AG04450 (cell line): ENCODE measurements at regions of chr18 and their contacts with region 1.

Region 1: DNA sequence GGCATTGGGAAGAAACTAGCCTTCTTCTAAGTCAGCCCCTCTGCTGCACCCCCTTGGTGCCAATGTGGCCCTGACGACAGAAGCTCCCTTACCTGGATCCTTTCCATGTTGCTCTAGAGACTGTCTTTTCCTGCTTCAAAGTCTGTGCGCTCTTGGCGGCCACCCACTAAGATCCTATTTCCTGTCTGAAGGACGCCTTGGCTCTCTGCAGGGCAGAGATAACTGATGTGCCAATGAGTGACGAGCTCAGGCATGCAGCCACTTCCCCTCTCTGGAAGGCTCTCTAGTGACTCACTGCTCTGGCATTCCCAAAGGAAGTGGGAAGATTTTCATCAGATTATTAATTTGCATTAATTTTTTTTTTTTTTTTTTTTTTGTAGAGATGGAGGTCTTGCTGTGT is 273.5 kb downstream of the CDH20 start:
- DNase-seq: peak; percentile 68
- H3K4me3 ChIP-seq: peak overlapping the region; percentile 63
- H3K27ac ChIP-seq: peak overlapping the region; percentile 78
- H3K27me3 ChIP-seq: no peaks in the 10 kb centered on the region
- CTCF ChIP-seq: no peak

Region 2: DNA sequence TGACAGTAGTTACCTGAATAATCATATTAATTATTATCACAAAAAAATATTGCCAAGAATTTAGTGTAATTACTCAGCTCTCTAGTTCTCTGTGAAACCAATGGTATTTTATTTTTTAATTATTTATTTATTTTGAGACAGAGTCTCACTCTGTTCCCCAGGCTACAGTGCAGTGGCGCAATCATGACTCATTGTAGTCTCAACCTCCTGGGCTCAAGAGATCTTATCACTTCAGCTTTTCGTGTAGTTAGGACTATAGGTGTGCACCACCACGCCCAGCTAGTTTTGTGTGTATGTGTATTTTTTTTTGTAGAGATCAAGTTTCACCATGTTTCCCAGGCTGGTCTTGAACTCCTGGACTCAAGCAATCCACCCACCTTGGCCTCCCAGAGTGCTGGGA is 713.9 kb before region 1 on chr18:
- CTCF ChIA-PET with region 1: no interaction called
- POLR2A ChIA-PET with region 1: no interaction called
- DNase-seq: no peak
- H3K4me3 ChIP-seq: no peak overlapping the region
- H3K27ac ChIP-seq: no peak overlapping the region
- H3K27me3 ChIP-seq: no peaks in the 10 kb centered on the region
- CTCF ChIP-seq: no peak

Region 3: DNA sequence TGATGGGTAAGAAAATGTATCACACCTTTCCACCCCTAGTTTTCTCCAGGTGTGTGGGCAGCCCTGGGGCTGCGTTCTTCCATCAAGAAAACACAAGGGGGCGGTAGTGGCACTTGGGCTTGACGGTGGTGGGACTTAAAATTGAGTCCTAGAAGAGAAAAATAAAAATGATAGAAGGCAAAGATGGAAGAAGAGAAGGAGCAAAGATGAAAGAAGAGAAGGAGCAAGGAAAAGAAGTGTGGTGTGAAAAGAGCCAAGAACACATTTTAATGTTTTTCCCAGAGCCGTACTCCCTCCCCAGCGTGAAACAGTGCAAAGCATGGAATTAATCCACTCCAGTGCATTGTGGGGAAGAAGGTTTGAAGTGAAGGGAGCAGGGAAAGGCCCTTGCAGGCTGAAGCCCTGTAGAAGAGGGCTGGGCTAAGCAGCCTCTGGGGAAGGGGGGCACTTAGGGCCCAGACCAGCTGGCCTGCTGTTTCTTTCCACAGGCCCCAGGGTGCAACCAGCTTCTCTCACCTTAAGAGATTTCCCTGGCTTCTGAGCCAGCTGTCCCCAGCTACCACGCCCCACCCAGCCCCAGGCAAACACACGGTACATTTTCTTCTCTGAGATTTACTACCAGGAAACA is 29.3 kb after region 1 on chr18:
- CTCF ChIA-PET with region 1: interaction called, 12 read pairs
- POLR2A ChIA-PET with region 1: no interaction called
- DNase-seq: peak; percentile 11
- H3K4me3 ChIP-seq: no peak overlapping the region
- H3K27ac ChIP-seq: no peak overlapping the region
- H3K27me3 ChIP-seq: no peaks in the 10 kb centered on the region
- CTCF ChIP-seq: peak; percentile 96

Region 4: DNA sequence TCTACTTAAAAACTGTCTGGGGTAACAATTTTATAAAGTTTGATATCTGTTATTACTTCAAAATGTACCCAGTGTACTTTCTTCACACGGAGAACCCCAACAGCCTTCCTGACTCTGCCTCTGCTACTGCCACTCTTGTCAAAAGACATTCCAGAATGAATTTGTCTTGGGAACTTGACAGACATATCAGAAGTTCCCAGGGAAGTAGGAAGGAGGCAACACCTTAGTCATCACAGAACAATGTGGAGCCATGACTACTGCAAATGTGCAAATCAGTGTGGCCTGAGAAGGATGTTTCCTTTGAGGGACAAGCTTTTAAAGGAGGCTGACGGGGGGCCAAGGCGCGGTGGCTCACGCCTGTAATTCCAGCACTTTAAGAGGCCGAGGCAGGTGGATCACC is 419.8 kb after region 1 on chr18:
- CTCF ChIA-PET with region 1: no interaction called
- POLR2A ChIA-PET with region 1: no interaction called
- DNase-seq: no peak
- H3K4me3 ChIP-seq: no peak overlapping the region
- H3K27ac ChIP-seq: no peak overlapping the region
- H3K27me3 ChIP-seq: no peaks in the 10 kb centered on the region
- CTCF ChIP-seq: no peak